ENCODE measurements at regions of chr3 and their contacts with region 1.

Region 1: DNA sequence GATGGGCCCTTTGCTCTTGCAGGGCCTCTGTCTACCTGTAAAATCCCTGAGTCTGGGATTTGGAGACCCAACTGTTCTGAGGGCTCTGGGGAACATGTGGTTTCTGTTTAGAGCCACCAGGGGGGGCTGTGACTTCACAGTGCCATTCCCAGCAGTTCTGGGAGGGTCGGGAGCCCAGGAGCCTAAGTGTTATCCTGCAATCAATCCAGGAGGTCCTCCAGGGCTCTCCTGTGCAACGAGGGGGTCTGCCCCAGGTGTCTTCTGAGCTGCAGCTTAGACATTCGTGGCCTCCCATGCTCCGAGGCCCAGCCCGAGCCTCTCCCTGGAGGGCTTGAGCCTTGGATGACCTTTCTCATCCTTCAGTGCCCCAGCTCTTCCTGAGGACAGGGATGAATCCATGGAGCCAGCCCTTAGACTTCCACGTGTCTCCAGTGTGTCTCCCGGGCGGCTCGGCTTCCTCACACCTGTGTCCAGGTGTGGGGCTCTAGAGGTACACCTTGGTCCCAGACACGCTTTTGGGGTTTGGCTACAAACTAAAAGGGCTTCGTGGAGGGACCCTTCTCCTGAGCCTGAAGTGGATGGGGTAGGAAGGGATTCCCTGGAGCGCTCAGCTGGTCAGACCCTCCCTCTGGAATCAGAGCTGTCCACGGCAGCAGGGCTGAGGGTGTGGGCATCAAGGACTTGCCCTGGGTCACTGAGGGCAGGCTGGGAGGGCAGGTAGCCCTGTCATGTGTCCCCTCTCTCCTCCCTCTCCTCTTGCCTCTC is 20.3 kb upstream of the ABTB1 start:
- DNase-seq: peak; percentile 35
- H3K4me3 Mint-ChIP-seq: no peak overlapping the region
- H3K27ac Mint-ChIP-seq: no peak overlapping the region
- H3K4me1 Mint-ChIP-seq: no peaks in the 10 kb centered on the region
- H3K27me3 Mint-ChIP-seq: no peaks in the 10 kb centered on the region

Region 2: DNA sequence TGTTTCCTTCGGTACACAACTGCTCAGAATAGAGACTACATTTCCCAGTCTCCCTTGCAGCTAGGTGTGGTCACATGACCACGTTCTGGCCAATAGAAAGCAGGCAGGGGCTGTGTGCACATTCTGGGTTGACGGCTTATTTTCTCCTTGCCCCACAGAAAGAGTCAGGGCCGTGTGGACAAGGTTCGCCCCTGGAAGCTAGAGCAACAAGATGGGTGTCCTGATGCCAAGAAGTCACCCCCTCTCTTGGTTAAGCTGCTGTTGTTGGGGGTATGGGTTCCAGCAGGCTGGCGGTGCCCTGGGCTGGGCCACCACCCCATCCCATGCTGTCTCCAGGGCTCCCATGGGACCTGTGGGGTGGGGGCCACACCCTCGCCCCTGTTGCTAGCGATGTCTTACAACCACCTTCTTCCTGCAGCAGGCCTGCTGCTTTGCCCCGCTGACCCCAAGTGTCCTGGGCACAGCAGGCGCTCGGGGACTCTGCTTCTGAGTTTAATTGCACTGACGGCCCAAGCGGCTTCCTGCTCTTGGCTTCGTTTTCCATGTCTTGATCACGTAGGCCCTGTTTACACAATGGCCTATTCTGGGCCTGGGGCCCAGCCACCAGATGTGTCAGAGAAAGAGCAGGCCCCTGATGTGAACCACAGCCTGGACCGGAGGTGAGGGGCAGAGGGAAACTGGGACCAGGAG is 45.3 kb after region 1 on chr3:
- CTCF ChIA-PET with region 1: interaction called, 11 read pairs
- POLR2A ChIA-PET with region 1: no interaction called
- intact Hi-C with region 1: no loop called
- DNase-seq: peak; percentile 66
- H3K4me3 Mint-ChIP-seq: no peak overlapping the region
- H3K27ac Mint-ChIP-seq: no peak overlapping the region
- H3K4me1 Mint-ChIP-seq: no peaks in the 10 kb centered on the region
- H3K27me3 Mint-ChIP-seq: no peaks in the 10 kb centered on the region

Region 3: GRCh38 chr3:127970966-127971592 is 318.7 kb after region 1 on chr3:
- CTCF ChIA-PET with region 1: no interaction called
- POLR2A ChIA-PET with region 1: no interaction called
- intact Hi-C with region 1: loop called (anchors 5 kb)
- DNase-seq: peak; percentile 21
- H3K4me3 Mint-ChIP-seq: no peak overlapping the region
- H3K27ac Mint-ChIP-seq: no peak overlapping the region
- H3K4me1 Mint-ChIP-seq: no peaks in the 10 kb centered on the region
- H3K27me3 Mint-ChIP-seq: peaks cover 8% of the 10 kb centered on the region

Measured in activated CD4-positive, alpha-beta memory T cell treated with anti-CD3 and anti-CD28 coated beads for 36 hours (primary cell).